ENCODE measurements at regions of chr13 and their contacts with region 1.

Region 1: GRCh38 chr13:44815623-44816022 is 173.6 kb downstream of the NUFIP1 start:
- DNase-seq: peak; percentile 82 to 96
- H3K4me3 ChIP-seq: no peak overlapping the region
- H3K27ac ChIP-seq: peak overlapping the region; percentile 86
- H3K4me1 ChIP-seq: peaks cover 64% of the 10 kb centered on the region
- H3K27me3 ChIP-seq: no peaks in the 10 kb centered on the region
- CTCF ChIP-seq: no peak

Region 2: DNA sequence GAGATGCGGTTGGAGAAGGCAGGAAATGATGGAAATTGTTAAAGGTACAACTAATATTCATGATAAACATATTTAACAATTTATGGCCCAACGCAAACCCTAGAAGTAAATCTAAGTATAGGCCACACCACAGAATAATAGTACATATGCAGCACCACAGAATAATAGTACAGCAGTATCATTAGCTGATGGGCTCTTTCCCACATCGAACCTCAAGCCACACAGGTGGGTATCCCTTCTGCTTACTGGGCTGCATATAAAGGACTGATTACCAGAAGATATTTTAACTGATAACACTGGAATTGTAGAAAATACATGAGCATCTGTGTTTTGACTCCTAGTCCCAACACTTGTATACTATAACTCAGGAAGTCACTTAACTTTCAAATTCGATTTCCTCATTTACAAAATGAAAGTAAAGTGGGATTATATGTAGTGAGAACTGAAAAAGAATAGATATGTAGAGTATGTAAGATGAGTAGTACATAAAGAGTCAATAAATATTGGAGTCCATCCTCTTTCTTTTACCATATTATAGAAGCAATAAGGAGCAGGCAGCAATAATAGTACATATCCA is 331.0 kb before region 1 on chr13:
- CTCF ChIA-PET with region 1: interaction called, 5 read pairs
- POLR2A ChIA-PET with region 1: no interaction called
- intact Hi-C with region 1: loop called (anchors 2 kb)
- DNase-seq: no peak
- H3K4me3 ChIP-seq: no peak overlapping the region
- H3K27ac ChIP-seq: peak overlapping the region; percentile 28; the same call in 1 of the 2 replicates
- H3K4me1 ChIP-seq: peaks cover 3% of the 10 kb centered on the region; the same call in 1 of the 2 replicates
- H3K27me3 ChIP-seq: no peaks in the 10 kb centered on the region
- CTCF ChIP-seq: no peak

Region 3: DNA sequence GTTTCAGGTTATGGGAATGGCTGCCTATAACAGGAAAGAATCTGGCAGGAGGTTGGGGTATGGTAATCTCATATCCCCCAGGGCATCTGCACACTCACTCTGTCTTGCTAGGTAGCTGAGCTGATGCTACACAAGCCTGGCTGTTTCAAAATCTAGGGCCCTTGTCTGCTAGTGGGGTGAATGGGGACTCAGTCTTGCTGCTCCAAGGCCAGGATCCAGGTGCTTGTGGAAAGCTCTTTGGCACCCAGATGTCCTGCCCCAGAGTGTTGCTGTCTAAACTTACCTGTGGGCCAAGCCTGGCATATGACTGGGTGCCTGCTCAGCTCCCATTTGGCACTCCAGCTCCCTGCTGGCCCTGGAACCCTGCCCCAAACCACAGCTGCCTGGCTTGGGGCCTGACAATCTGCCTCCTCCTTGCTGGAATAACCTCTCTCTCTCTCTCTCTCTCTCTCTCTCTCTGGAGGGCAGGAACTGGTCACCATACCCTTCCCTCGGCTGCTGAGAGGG is 81.4 kb before region 1 on chr13:
- CTCF ChIA-PET with region 1: no interaction called
- POLR2A ChIA-PET with region 1: no interaction called
- intact Hi-C with region 1: loop called (anchors 1 kb)
- DNase-seq: peak; percentile 66 to 71
- H3K4me3 ChIP-seq: no peak overlapping the region
- H3K27ac ChIP-seq: peak overlapping the region; percentile 22
- H3K4me1 ChIP-seq: peaks cover 47% of the 10 kb centered on the region
- H3K27me3 ChIP-seq: no peaks in the 10 kb centered on the region
- CTCF ChIP-seq: no peak

Region 4: DNA sequence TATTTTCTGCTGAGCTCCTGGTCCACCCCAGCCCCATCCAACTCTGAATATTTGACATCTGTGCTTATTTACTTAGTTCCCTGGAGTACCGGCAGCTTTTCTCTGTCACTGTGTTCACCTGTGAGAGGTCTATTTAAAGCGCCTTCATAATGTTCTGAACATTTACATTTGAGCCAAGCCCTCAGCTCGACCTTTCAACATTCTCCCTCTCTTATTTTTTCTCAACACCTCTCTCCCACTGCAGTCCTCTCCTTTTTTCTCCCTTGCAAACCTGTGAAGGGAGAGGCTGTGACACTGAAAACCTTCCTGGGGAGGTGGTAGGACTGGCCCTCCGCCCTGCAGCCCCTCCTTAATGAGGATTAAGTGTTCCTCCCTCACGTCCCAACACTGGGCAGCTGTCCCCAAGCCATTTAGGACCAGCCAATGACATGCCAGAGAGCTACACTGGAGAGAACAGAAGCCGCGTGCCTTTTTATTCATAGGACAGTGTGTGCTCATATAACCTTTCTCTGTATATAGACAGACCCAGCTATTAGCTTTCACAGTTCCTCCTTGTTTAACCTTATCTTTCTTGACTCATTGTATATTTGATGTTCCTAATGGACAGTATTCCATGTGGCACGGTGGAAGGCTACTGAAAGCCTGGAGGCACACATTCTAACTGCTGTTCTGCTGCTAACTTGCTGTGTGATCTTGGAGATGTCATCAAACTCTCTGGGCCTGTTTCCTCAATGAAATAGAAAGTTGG is 38.9 kb after region 1 on chr13:
- CTCF ChIA-PET with region 1: no interaction called
- POLR2A ChIA-PET with region 1: interaction called, 10 read pairs
- intact Hi-C with region 1: no loop called
- DNase-seq: no peak
- H3K4me3 ChIP-seq: no peak overlapping the region; the same call in 1 of the 2 replicates
- H3K27ac ChIP-seq: no peak overlapping the region
- H3K4me1 ChIP-seq: peaks cover 20% of the 10 kb centered on the region
- H3K27me3 ChIP-seq: no peaks in the 10 kb centered on the region
- CTCF ChIP-seq: no peak

Region 5: GRCh38 chr13:45109102-45109720 is 293.6 kb after region 1 on chr13:
- CTCF ChIA-PET with region 1: no interaction called
- POLR2A ChIA-PET with region 1: no interaction called
- intact Hi-C with region 1: no loop called
- DNase-seq: no peak
- H3K4me3 ChIP-seq: no peak overlapping the region
- H3K27ac ChIP-seq: no peak overlapping the region
- H3K4me1 ChIP-seq: peaks cover 18% of the 10 kb centered on the region
- H3K27me3 ChIP-seq: no peaks in the 10 kb centered on the region
- CTCF ChIP-seq: no peak

Measured in PC-9 (cell line).